Psoas muscle (tissue), 8 donors: ENCODE measurements at regions of chr12 and their contacts with region 1.

Region 1: GRCh38 chr12:31288381-31288780 is 37.6 kb downstream of the SINHCAF start:
- DNase-seq: no peak
- ATAC-seq: no peak
- H3K4me3 ChIP-seq: no peak overlapping the region
- H3K27ac ChIP-seq: no peak overlapping the region
- H3K4me1 ChIP-seq: no peaks in the 10 kb centered on the region
- H3K27me3 ChIP-seq: no peaks in the 10 kb centered on the region
- CTCF ChIP-seq: no peak

Region 2: GRCh38 chr12:30732954-30733637 is 555.3 kb before region 1 on chr12:
- intact Hi-C with region 1: no loop called
- DNase-seq: no peak
- ATAC-seq: no peak
- H3K4me3 ChIP-seq: no peak overlapping the region
- H3K27ac ChIP-seq: no peak overlapping the region
- H3K4me1 ChIP-seq: no peaks in the 10 kb centered on the region
- H3K27me3 ChIP-seq: no peaks in the 10 kb centered on the region
- CTCF ChIP-seq: no peak

Region 3: GRCh38 chr12:31205054-31205453 is 83.3 kb before region 1 on chr12:
- intact Hi-C with region 1: no loop called
- DNase-seq: no peak
- ATAC-seq: no peak
- H3K4me3 ChIP-seq: no peak overlapping the region
- H3K27ac ChIP-seq: no peak overlapping the region
- H3K4me1 ChIP-seq: no peaks in the 10 kb centered on the region
- H3K27me3 ChIP-seq: no peaks in the 10 kb centered on the region
- CTCF ChIP-seq: no peak

Region 4: DNA sequence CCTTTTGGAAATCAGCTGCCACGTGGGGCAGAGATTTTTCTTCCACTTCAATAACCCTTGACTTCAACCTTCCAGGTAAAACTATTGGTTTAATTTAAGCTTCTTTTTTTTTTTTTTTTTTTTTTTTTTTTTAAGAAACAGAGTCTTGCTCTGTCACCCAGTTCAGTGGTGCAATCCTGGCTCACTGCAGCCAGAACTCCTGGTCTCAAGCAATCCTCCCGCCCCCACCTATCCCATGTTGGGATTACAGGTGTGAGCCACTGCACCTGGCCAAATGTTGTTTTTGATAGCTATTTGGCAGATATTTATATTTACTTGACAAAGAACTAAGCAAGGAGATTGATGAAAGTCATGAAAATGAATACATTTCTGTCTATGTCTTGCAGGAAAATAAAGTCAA is 27.5 kb before region 1 on chr12:
- intact Hi-C with region 1: loop called in 1 of 2 experiments (anchors 2 kb)
- DNase-seq: no peak
- ATAC-seq: no peak
- H3K4me3 ChIP-seq: no peak overlapping the region
- H3K27ac ChIP-seq: no peak overlapping the region
- H3K4me1 ChIP-seq: no peaks in the 10 kb centered on the region
- H3K27me3 ChIP-seq: no peaks in the 10 kb centered on the region
- CTCF ChIP-seq: no peak

Region 5: DNA sequence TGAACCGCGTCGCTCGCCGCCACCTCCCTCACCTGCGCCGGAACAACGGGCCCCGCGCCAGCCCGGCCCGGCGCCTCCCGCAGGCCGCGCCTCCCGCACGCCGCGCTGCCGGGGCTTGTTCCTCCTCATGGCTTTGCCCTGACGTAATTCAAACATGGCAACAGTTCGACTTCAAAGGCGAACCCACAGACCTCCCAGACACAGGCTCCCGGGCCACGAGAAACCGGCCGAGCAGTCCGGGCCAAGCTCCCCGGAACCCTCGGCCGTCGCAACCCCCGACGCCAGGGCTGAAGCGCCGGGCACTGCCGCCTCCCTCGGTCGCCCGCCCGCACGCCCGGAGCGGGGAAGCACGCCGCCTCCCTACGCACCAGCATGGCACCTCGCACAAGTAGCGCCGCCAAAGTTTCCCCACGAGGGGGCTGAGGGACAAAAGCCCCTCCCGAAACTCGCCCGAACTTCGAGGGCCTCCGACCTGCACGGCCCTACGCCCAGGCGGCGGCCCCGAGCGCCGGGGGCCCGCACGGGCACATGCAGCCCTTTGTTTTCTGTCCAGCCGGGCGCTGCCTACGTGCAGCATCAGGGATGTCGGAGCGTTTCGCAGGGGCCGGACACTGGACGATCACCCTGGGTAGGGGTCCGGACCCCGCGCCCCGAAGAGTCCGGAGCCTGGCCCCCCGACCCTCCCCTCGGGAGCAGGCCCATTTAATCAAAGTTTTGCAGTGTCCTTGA is 35.9 kb after region 1 on chr12:
- intact Hi-C with region 1: loop called in 1 of 2 experiments (anchors 1 kb)
- DNase-seq: peak; percentile 63 to 68
- ATAC-seq: peak; percentile 11 to 23 (median 20)
- H3K4me3 ChIP-seq: peak overlapping the region; percentile 82
- H3K27ac ChIP-seq: peak overlapping the region; percentile 72
- H3K4me1 ChIP-seq: no peaks in the 10 kb centered on the region
- H3K27me3 ChIP-seq: peaks cover 0 to 41% (median 0%) of the 10 kb centered on the region in 3 donors
- CTCF ChIP-seq: no peak

Region 6: GRCh38 chr12:31339831-31340622 is 51.6 kb after region 1 on chr12:
- intact Hi-C with region 1: no loop called
- DNase-seq: no peak
- ATAC-seq: no peak
- H3K4me3 ChIP-seq: no peak overlapping the region
- H3K27ac ChIP-seq: no peak overlapping the region
- H3K4me1 ChIP-seq: no peaks in the 10 kb centered on the region
- H3K27me3 ChIP-seq: no peaks in the 10 kb centered on the region
- CTCF ChIP-seq: no peak

Region 7: DNA sequence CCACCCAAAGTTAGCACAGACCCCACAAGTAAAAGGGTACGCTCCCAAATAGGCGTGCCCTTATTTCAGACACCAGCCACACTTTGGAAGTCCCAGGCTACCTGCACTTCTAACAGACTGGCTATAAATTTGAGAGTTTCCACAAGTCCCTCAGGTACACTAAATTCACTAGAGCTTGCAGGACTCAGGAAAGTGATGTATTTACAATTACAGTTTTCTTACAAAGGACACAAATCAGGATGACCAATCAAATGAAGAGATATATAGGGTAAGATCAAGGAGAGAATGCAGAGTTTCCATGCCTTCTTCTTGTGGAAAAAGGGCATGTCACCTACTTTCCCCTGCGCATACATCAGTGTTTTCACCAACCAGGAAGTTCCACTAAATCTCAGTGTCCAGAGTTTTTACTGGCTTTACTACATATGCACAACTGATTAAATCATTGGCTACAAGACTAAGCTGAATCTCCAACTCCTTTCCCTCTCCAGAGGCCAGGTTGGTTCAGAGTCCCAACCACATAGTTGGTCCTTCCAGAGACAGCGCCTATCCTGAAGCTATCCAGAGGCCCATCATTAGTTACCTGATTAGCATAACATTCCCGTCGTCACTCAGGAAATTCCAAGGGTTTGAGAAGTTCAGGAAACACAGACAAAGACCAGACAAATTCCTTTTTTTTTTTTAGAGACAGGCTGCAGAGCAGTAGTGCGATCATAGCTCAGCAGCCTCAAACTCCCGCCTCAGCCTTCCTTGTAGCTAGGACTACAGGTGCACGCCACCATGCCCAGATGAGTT is 218.3 kb after region 1 on chr12:
- intact Hi-C with region 1: no loop called
- DNase-seq: no peak
- ATAC-seq: no peak
- H3K4me3 ChIP-seq: no peak overlapping the region
- H3K27ac ChIP-seq: no peak overlapping the region
- H3K4me1 ChIP-seq: peaks cover 7% of the 10 kb centered on the region
- H3K27me3 ChIP-seq: no peaks in the 10 kb centered on the region
- CTCF ChIP-seq: no peak